ENCODE measurements at regions of chr1 and their contacts with region 1.

Region 1: GRCh38 chr1:196180847-196181593 is 427.2 kb downstream of the KCNT2 start:
- DNase-seq: peak; percentile 94
- H3K4me3 ChIP-seq: no peak overlapping the region
- H3K27ac ChIP-seq: peak overlapping the region; percentile 70
- H3K4me1 ChIP-seq: peaks cover 15% of the 10 kb centered on the region
- H3K27me3 ChIP-seq: no peaks in the 10 kb centered on the region
- CTCF ChIP-seq: no peak
- POLR2A ChIP-seq: no peak

Region 2: DNA sequence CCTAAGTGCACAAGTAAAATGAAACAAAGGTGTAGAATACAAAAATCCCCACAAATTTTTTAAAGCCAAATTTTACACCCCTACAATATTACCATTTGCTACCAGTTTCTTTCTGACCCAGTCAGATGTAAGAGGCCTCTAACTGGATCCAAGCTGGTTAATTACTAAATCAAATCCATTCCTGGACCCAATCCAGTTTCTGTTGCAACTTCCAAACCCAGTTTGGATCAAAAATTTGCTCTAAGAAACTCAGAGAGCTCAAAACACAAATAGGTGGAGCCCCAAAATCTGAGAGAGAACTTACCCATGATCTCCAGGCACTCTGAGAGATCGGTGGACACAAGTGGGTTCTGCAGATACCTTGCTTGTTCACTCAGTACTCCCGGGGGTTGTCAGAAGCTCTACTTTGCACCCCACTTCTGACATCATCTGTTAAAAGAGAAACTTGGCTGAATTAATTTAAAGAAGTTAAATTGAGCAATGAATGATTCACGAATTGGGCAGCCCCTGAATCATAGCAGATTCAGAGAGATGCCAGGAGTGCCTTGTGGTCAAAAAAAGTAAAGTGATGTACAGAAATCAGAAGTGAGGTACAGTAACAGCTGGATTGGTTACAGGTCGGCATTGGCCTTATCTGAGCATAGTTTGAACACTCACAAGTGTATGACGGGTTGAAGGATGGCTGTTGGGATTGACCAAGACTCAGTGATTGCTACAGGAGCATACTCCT is 20.8 kb before region 1 on chr1:
- CTCF ChIA-PET with region 1: interaction called, 6 read pairs
- POLR2A ChIA-PET with region 1: no interaction called
- dilution Hi-C with region 1: no loop called
- intact Hi-C with region 1: loop called (anchors 2 kb)
- DNase-seq: no peak
- H3K4me3 ChIP-seq: no peak overlapping the region
- H3K27ac ChIP-seq: no peak overlapping the region
- H3K4me1 ChIP-seq: no peaks in the 10 kb centered on the region
- H3K27me3 ChIP-seq: no peaks in the 10 kb centered on the region
- CTCF ChIP-seq: no peak
- POLR2A ChIP-seq: no peak